ENCODE measurements at regions of chr2 and their contacts with region 1.

Region 1: GRCh38 chr2:202634556-202635427 is at the start of gene FAM117B:
- DNase-seq: peak; percentile 99
- H3K4me3 Mint-ChIP-seq: peak within 1 kb of the TSS; percentile 98
- H3K27ac Mint-ChIP-seq: peak within 1 kb of the TSS; percentile 97
- H3K4me1 Mint-ChIP-seq: peaks cover 35% of the 10 kb centered on the region
- H3K27me3 Mint-ChIP-seq: no peaks in the 10 kb centered on the region
- total RNA-seq, gene FAM117B: 14.5 TPM in 2 replicates

Region 2: GRCh38 chr2:201414099-201415023 is 1220.4 kb before region 1 on chr2:
- intact Hi-C with region 1: loop called (anchors 10 kb)
- DNase-seq: peak; percentile 64
- H3K4me3 Mint-ChIP-seq: no peak overlapping the region
- H3K27ac Mint-ChIP-seq: no peak overlapping the region
- H3K4me1 Mint-ChIP-seq: peaks cover 5% of the 10 kb centered on the region
- H3K27me3 Mint-ChIP-seq: no peaks in the 10 kb centered on the region

Region 3: DNA sequence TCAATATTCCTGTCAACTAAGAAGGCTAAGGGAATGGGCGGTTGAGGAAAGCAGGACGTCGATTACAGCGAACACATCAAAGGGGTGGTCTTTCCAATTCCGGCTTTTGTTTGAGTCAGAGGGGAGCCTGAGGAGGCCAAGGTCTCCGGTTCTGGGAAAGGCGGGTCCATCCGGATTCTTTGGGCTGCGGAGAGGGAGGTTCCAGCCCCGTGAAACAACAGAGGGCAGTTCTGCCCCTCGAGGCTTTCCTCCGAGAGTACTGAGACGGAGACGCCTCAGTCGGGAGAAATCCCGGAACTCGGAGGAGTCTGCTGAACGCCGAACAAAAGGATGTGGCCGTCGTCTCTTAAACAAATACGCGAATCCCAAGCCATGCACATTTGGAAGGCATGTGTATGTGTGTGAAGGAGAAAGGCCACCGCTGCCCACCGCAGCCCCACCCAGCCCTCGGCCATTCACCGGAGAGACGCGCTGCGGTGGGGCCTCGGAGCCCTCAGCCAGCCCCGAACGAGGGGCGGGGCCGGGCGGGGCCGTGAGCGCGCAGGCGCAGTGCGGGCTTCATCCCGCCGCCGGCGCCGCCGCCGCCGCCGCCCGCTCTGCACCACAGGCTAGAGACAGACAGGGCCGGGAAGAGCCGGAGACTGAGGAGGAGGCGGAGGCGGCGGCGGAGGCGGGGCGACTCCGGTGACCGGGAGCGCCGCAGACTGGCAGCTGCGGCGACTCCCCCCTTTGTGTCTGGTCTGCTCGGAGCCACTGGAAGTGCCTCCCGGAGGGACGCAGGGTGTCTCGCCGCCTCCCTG is 259.0 kb before region 1 on chr2 and contains the start of gene BMPR2:
- intact Hi-C with region 1: loop called (anchors 10 kb)
- DNase-seq: peak; percentile 96
- H3K4me3 Mint-ChIP-seq: peak within 1 kb of the TSS; percentile 95
- H3K27ac Mint-ChIP-seq: peak within 1 kb of the TSS; percentile 85
- H3K4me1 Mint-ChIP-seq: peaks cover 25% of the 10 kb centered on the region
- H3K27me3 Mint-ChIP-seq: peaks cover 10% of the 10 kb centered on the region
- total RNA-seq, gene BMPR2: 5.4 and 6.3 TPM in 2 replicates

Region 4: DNA sequence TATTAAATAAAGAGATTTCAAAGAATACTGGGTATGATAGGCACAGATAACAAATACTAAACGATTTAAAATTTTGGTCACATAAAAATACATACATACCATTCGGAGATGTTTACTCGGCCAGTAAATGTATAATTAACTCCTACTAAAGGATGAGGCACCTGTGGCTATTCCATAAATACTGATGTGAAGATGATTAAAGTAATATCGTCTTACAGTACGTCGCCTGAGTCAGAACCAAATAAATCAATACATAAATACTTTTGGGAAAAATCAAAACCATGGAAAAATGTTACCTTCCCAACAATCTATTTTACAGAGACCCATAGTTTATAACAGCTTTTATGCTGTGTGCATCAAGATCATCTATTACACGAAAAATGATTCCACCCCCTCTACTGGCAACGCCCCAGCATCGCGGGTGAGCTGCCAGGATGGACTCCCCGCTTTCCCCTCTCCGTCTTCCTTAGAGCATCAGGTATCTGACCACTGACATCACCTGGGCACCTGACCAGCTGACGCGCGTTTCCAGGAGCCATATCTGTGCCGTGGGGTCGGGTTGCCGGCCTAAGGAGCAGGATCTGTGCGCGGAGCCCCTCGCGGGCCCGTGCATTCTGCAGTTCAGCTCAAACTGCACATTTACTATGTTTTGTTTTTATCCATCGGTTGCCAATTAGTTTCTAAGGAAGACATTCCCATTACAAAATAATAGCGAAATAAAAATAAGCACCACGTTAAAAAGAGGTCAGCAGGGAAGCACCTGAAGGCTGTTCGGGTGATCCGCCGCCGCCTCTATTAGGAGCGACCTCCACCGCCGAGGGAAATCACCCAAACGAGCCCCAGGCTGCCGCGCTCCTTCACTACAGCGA is 235.9 kb after region 1 on chr2:
- intact Hi-C with region 1: loop called (anchors 1 kb)
- DNase-seq: peak; percentile 90
- H3K4me3 Mint-ChIP-seq: peak overlapping the region; percentile 88
- H3K27ac Mint-ChIP-seq: peak overlapping the region; percentile 87
- H3K4me1 Mint-ChIP-seq: peaks cover 7% of the 10 kb centered on the region
- H3K27me3 Mint-ChIP-seq: no peaks in the 10 kb centered on the region

Region 5: DNA sequence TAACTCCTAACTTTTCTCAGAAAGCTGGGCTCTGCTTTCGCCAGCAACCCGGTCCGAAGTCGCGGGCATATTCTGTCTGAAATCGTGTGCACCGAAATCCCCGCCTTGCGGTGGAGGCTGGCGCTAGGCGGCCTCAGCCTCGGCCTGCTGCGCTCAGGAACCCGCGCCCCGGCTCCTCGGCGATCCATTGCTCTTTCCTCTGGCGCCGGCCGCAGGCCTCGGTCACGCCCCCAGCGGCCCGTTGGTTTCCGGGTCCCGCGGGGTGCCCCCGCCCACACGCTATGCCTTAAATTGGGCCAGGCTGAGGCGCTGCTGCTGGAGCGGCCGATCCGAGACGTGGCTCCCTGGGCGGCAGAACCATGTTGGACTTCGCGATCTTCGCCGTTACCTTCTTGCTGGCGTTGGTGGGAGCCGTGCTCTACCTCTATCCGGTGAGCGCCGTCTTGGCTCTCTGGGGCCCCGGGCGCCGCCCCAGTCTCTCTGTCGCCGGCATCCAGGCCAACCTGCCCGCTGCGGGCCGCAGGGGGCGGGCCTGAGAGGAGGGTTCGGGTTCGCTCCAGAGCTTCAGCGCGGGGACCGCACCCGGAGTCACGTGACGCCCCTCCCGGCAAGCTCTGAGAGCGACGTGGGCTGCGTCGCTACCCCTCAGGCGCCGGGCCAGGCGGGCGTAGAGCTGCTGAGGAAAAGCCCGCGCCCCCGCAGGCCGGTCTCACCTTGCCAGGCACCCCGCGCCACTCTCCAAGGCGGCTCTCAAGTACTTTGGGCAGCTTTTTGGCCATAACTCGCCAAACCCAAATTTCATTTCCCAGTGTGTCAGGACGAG is 604.1 kb after region 1 on chr2 and contains the start of gene CYP20A1:
- intact Hi-C with region 1: loop called (anchors 5 kb)
- DNase-seq: peak; percentile 99
- H3K4me3 Mint-ChIP-seq: peak within 1 kb of the TSS; percentile 95
- H3K27ac Mint-ChIP-seq: peak within 1 kb of the TSS; percentile 100
- H3K4me1 Mint-ChIP-seq: peaks cover 27% of the 10 kb centered on the region
- H3K27me3 Mint-ChIP-seq: no peaks in the 10 kb centered on the region
- total RNA-seq, gene CYP20A1: 21.6 and 23.2 TPM in 2 replicates

Measured in activated CD4-positive, alpha-beta T cell treated with anti-CD3 and anti-CD28 coated beads, Interleukin-2, amount 10 ng/mL, durations not matched to agents 24 days and 14 days (primary cell).